ENCODE measurements at regions of chr1 and their contacts with region 1.

Region 1: DNA sequence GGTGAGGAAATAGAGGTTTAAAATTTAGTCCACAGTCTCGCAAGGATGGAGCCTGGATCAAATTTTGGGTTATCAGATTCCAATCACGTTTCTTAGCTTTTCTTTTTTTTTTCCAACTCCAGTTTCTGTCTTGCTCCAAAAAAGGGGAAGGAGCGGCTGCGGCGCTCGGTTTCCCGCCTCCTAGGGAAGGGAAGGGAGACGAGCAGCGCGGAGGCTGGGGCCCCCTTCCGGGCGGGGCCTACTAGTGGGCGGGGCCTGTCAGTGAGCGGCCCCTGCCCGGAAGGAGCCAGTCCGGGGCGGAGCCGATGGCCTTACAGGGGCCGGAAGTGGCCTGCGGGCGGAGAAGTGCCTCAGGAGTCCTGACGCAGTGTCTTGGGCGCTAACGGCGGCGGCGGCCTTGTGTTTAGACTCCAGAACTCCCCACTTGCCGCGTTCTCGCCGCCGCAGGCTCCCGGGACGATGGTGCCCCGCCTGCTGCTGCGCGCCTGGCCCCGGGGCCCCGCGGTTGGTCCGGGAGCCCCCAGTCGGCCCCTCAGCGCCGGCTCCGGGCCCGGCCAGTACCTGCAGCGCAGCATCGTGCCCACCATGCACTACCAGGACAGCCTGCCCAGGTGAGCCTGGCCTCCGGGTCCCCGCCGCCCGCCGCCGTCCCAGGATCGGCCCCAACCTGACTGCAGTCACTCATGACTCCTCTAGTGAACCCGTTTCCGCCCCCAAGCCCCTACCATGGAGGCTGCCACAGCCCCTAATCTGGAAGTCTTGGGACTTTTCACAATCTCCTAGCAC is at the start of gene CPT2:
- DNase-seq: peak; percentile 83 to 90
- ATAC-seq: peak; percentile 90 to 94
- H3K4me3 ChIP-seq: peak within 1 kb of the TSS; percentile 83 to 94 (median 88)
- H3K27ac ChIP-seq: peak within 1 kb of the TSS; percentile 88 to 98 (median 96)
- H3K4me1 ChIP-seq: peaks cover 27 to 30% of the 10 kb centered on the region in 2 donors
- H3K27me3 ChIP-seq: no peaks in the 10 kb centered on the region
- CTCF ChIP-seq: peak in 2 of 5 experiments; percentile 21 to 35
- POLR2A ChIP-seq: peak; percentile 91 to 98
- total RNA-seq, gene CPT2: 13.3 to 30.6 (median 26.6) TPM

Region 2: DNA sequence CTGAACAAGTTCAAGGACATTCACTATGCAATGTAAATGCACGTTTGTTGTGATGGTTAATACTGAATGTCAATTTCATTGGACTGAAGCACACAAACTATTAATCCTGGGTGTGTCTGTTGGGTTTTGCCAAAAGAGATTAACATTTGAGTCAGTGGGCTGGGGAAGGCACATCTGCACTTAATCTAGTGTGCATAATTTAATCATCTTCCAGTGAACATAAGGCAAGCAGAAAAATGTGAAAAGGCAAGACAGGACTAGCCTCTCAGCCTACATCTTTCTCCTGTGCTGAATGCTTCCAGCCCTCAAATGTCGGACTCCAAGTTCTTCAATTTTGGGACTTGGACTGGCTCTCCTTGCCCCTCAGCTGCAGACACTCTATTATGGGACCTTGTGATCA is 752.2 kb before region 1 on chr1:
- in situ Hi-C with region 1: no loop called
- intact Hi-C with region 1: no loop called
- DNase-seq: no peak
- ATAC-seq: no peak
- H3K4me3 ChIP-seq: no peak overlapping the region
- H3K27ac ChIP-seq: no peak overlapping the region
- H3K4me1 ChIP-seq: no peaks in the 10 kb centered on the region
- H3K27me3 ChIP-seq: no peaks in the 10 kb centered on the region
- CTCF ChIP-seq: no peak
- POLR2A ChIP-seq: no peak

Region 3: GRCh38 chr1:52751589-52752483 is 444.8 kb before region 1 on chr1:
- in situ Hi-C with region 1: no loop called
- intact Hi-C with region 1: no loop called
- DNase-seq: no peak
- ATAC-seq: no peak
- H3K4me3 ChIP-seq: no peak overlapping the region
- H3K27ac ChIP-seq: peak overlapping the region; percentile 40 to 59 (median 51)
- H3K4me1 ChIP-seq: peaks cover 46 to 56% of the 10 kb centered on the region in 2 donors
- H3K27me3 ChIP-seq: no peaks in the 10 kb centered on the region
- CTCF ChIP-seq: no peak
- POLR2A ChIP-seq: no peak

Region 4: GRCh38 chr1:52904927-52905698 is 291.6 kb before region 1 on chr1:
- in situ Hi-C with region 1: loop called in 2 of 4 experiments (anchors 25 kb)
- intact Hi-C with region 1: no loop called
- DNase-seq: peak; percentile 75 to 89
- ATAC-seq: peak; percentile 99
- H3K4me3 ChIP-seq: peak overlapping the region in 3 of 4 donors; percentile 5 to 25 (median 5)
- H3K27ac ChIP-seq: peak overlapping the region; percentile 79 to 94 (median 86)
- H3K4me1 ChIP-seq: peaks cover 21 to 22% of the 10 kb centered on the region in 2 donors
- H3K27me3 ChIP-seq: no peaks in the 10 kb centered on the region
- CTCF ChIP-seq: peak in 3 of 5 experiments; percentile 7 to 42 (median 36)
- POLR2A ChIP-seq: peak in 1 of 2 donors; percentile 25

Region 5: GRCh38 chr1:53073868-53074311 is 122.8 kb before region 1 on chr1:
- in situ Hi-C with region 1: no loop called
- intact Hi-C with region 1: no loop called
- DNase-seq: peak in 1 of 2 donors; percentile 22
- ATAC-seq: peak in 1 of 2 donors; percentile 31
- H3K4me3 ChIP-seq: no peak overlapping the region
- H3K27ac ChIP-seq: peak overlapping the region in 1 of 4 donors; percentile 9
- H3K4me1 ChIP-seq: no peaks in the 10 kb centered on the region
- H3K27me3 ChIP-seq: no peaks in the 10 kb centered on the region
- CTCF ChIP-seq: no peak
- POLR2A ChIP-seq: no peak

Region 6: GRCh38 chr1:53220171-53220961 is 23.7 kb after region 1 on chr1 and contains the start of gene CZIB:
- in situ Hi-C with region 1: no loop called
- intact Hi-C with region 1: loop called (anchors 1 kb)
- DNase-seq: peak; percentile 83 to 91
- ATAC-seq: peak; percentile 97 to 98
- H3K4me3 ChIP-seq: peak within 1 kb of the TSS; percentile 80 to 89 (median 86)
- H3K27ac ChIP-seq: peak within 1 kb of the TSS; percentile 94 to 98 (median 96)
- H3K4me1 ChIP-seq: peaks cover 13 to 15% of the 10 kb centered on the region in 2 donors
- H3K27me3 ChIP-seq: no peaks in the 10 kb centered on the region
- CTCF ChIP-seq: no peak
- POLR2A ChIP-seq: peak; percentile 80 to 85
- total RNA-seq, gene CZIB: 38.3 to 51.4 (median 44.9) TPM

Region 7: GRCh38 chr1:53238197-53239155 is 41.8 kb after region 1 on chr1 and contains the start of gene MAGOH:
- in situ Hi-C with region 1: no loop called
- intact Hi-C with region 1: loop called (anchors 2 kb)
- DNase-seq: peak; percentile 80 to 88
- ATAC-seq: peak; percentile 94 to 95
- H3K4me3 ChIP-seq: peak within 1 kb of the TSS; percentile 66 to 98 (median 84)
- H3K27ac ChIP-seq: peak within 1 kb of the TSS; percentile 77 to 82 (median 81)
- H3K4me1 ChIP-seq: peaks cover 19 to 21% of the 10 kb centered on the region in 2 donors
- H3K27me3 ChIP-seq: no peaks in the 10 kb centered on the region
- CTCF ChIP-seq: peak in 1 of 5 experiments; percentile 16
- POLR2A ChIP-seq: peak; percentile 57 to 69
- total RNA-seq, gene MAGOH: 12.9 to 34.3 (median 19.8) TPM

Measured in gastrocnemius medialis (tissue), 4 donors.